ENCODE measurements at regions of chr14 and their contacts with region 1.

Region 1: DNA sequence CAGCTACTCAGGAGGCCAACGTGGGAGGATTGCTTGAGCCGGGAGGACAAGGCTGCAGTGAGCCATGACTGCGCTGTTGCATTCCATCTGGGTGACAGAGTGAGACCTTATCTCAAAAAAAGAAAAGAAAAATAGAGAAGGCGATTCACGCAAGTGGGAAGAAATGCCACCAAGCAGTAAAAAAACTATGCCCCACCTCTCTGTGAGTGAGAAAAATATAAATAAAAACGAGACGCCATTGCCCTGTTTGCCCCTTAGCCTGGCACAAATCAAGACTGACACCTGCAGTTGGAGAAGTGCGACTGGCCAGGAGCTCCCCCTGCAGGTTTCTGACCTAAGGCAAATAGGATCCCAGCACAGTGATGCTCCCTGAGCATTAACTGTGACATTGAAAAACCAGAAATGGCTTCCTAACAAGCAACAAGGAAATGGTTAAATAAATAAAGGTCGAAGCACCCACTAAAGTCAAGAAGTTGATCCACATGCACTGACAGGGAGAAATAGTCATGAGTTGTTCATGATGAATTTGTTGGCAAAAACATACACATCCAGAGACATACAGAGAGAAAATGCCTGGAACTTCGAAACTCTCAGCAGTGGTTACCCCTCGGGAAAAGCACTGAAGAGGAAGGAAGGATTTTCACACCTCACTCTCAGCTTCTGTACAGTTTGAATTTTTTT is 21.1 kb downstream of the GSC start:
- DNase-seq: peak; percentile 53
- H3K4me3 ChIP-seq: no peak overlapping the region
- H3K27ac ChIP-seq: no peak overlapping the region
- H3K4me1 ChIP-seq: no peaks in the 10 kb centered on the region
- H3K27me3 ChIP-seq: no peaks in the 10 kb centered on the region
- CTCF ChIP-seq: peak; percentile 55
- EP300 ChIP-seq: no peak
- RAD21 ChIP-seq: peak; percentile 59

Region 2: GRCh38 chr14:94689218-94689984 is 59.4 kb before region 1 on chr14:
- CTCF ChIA-PET with region 1: interaction called, 26 read pairs
- POLR2A ChIA-PET with region 1: no interaction called
- DNase-seq: peak; percentile 93
- H3K4me3 ChIP-seq: peak overlapping the region in 1 of 2 experiments; percentile 39; a peak in 2 of 4 replicates
- H3K27ac ChIP-seq: no peak overlapping the region
- H3K4me1 ChIP-seq: peaks cover 0 to 6% of the 10 kb centered on the region in 2 experiments; a peak in 1 of 4 replicates
- H3K27me3 ChIP-seq: no peaks in the 10 kb centered on the region
- CTCF ChIP-seq: peak; percentile 95
- EP300 ChIP-seq: no peak
- RAD21 ChIP-seq: peak; percentile 93

Region 3: DNA sequence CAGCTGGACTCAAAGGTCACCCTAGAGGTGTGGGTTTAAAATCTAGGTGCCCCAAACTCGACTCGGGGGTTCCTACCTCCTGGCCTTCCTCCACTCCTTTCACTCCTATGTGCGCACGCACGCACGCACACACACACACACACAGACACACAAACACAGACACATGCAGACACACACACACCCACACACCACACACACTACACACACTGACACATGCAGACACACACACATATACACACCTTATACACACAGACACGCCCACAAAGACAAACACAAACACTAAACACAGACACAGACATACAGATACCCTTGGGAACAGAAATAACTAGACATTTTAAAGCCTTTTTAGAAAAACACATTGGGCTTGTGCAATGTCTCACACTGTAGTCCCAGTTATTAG is 10.7 kb before region 1 on chr14:
- CTCF ChIA-PET with region 1: interaction called, 14 read pairs
- POLR2A ChIA-PET with region 1: no interaction called
- DNase-seq: no peak
- H3K4me3 ChIP-seq: no peak overlapping the region
- H3K27ac ChIP-seq: no peak overlapping the region
- H3K4me1 ChIP-seq: no peaks in the 10 kb centered on the region
- H3K27me3 ChIP-seq: no peaks in the 10 kb centered on the region; the same call in 1 of the 2 replicates
- CTCF ChIP-seq: no peak
- EP300 ChIP-seq: no peak
- RAD21 ChIP-seq: no peak

Region 4: DNA sequence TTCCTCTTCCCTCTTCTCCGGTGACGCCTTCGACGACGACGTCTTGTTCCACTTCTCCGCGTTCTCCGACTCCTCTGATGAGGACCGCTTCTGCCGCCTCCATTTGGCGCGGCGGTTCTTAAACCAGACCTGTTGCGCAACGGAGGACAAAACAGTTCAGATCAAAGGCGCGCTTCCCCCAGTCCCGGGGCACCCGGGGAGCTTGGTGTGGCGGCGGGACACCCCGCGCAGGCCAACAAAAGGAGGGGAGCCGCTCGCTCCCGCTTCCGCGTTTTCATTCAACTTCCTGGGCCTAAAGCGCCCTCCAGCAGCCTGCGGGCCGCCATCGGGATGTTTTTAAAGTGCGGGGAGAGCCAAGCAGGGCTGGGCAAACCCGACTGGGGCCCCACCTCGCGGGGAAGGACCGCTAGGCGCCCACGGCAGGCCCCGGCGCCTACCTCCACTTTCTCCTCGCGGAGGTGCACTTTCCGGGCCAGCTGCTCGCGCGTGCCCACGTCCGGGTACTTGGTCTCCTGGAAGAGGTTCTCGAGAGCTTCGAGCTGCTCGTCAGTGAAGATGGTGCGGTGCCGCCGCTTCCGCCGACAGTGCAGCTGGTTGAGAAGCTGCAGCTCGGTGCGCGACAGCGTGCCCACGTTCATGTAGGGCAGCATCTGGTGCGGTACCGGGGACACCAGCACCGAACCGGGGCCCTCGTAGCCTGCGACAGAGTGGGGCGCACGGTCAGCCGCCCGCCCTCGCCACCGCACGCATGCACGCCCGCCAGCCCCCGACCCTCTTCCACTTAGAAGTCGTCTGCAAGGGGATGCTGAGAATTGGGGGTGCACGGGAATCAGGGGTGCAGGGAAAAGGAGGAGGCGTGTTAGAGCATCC is 19.9 kb after region 1 on chr14:
- CTCF ChIA-PET with region 1: interaction called, 10 read pairs
- POLR2A ChIA-PET with region 1: no interaction called
- DNase-seq: no peak
- H3K4me3 ChIP-seq: peak overlapping the region; percentile 54 to 64; a peak in 1 of 4 replicates
- H3K27ac ChIP-seq: no peak overlapping the region
- H3K4me1 ChIP-seq: no peaks in the 10 kb centered on the region; a peak in 1 of 4 replicates
- H3K27me3 ChIP-seq: peaks cover 4% of the 10 kb centered on the region; the same call in 1 of the 2 replicates
- CTCF ChIP-seq: no peak
- EP300 ChIP-seq: no peak
- RAD21 ChIP-seq: no peak

Region 5: DNA sequence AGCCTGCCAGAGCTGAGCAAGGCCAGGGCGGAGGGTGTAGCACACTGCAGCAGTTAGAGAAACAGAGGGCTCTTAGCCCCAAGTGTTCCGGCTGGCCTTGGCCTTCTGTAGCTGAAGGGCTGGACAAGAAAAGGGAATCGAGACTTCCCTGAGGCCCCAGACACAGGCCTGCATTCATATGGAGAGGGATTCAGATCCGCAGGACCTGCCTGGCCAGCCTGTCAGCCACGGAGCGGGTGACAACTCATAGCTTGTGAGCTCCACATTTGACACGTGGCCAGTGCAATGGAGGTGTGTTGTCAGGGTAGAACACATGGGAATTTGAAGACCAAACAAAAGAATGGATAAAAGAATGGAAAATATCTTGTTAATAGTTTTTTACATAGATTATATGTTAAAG is 203.3 kb after region 1 on chr14:
- CTCF ChIA-PET with region 1: no interaction called
- POLR2A ChIA-PET with region 1: no interaction called
- DNase-seq: no peak
- H3K4me3 ChIP-seq: no peak overlapping the region
- H3K27ac ChIP-seq: no peak overlapping the region
- H3K4me1 ChIP-seq: no peaks in the 10 kb centered on the region
- H3K27me3 ChIP-seq: no peaks in the 10 kb centered on the region
- CTCF ChIP-seq: no peak
- EP300 ChIP-seq: no peak
- RAD21 ChIP-seq: no peak